ENCODE measurements at regions of chr5 and their contacts with region 1.

Region 1: GRCh38 chr5:141701360-141702119 is 19.5 kb upstream of the ARAP3 start:
- DNase-seq: no peak
- H3K4me3 Mint-ChIP-seq: no peak overlapping the region
- H3K27ac Mint-ChIP-seq: no peak overlapping the region
- H3K4me1 Mint-ChIP-seq: no peaks in the 10 kb centered on the region
- H3K27me3 Mint-ChIP-seq: peaks cover 19% of the 10 kb centered on the region
- CTCF ChIP-seq: no peak

Region 2: DNA sequence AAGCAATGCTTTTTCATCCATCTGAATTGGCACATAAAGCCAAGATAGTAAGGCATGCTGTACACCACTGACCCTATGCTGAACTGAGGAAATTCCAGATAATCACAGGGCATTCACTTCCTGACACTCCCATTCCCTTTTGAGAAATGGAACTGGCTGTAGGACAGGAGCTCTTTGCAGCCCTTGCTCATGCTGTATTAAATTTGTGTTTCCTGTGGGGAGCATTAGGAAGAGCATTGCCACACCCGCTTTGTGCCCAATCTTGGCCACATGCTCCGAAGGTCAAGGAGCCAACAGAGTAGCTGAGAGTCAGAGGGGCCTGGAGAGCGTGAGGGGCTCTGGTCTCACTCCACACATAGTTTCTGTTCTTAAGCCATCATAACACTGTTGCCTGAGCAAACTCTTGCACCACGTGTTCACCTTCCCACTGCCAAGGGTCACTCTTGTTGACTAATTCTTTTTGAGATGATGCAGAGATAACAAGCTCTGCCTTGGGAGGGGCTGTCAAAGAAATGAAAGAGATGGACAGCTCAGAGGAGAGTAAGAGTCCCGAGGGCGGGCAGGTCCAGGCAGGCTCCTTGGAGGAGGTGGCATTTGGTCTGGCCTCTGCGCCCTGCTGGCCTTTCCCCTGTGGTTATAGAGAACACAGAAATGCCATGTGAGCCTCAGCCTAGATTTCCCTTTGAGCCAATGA is 12.2 kb after region 1 on chr5:
- CTCF ChIA-PET with region 1: interaction called, 35 read pairs
- POLR2A ChIA-PET with region 1: interaction called, 3 read pairs
- intact Hi-C with region 1: no loop called
- DNase-seq: peak; percentile 96
- H3K4me3 Mint-ChIP-seq: peak overlapping the region; percentile 5
- H3K27ac Mint-ChIP-seq: peak overlapping the region; percentile 73
- H3K4me1 Mint-ChIP-seq: peaks cover 37% of the 10 kb centered on the region
- H3K27me3 Mint-ChIP-seq: no peaks in the 10 kb centered on the region
- CTCF ChIP-seq: no peak

Region 3: DNA sequence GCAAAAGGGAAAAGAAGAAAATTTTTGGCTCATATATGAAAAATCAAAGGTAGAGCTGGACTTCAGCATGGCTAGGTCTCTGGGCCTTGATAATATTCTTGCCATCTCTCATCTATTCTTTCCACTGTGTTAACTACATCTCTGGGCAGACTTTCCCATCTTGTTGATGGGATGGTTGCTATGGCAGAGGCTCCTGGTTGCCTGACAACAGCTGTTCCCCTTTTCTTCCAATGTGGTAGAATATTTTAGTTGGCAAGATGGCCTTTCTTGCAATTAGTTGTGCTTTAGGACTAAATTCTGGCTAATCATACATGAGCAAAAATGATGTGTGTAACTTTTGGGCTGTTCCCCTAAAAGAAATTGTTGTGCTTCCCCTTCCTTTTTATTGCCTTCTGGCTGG is 20.7 kb after region 1 on chr5:
- CTCF ChIA-PET with region 1: interaction called, 14 read pairs
- POLR2A ChIA-PET with region 1: no interaction called
- intact Hi-C with region 1: no loop called
- DNase-seq: no peak
- H3K4me3 Mint-ChIP-seq: no peak overlapping the region
- H3K27ac Mint-ChIP-seq: no peak overlapping the region
- H3K4me1 Mint-ChIP-seq: no peaks in the 10 kb centered on the region
- H3K27me3 Mint-ChIP-seq: no peaks in the 10 kb centered on the region
- CTCF ChIP-seq: no peak

Region 4: GRCh38 chr5:141757402-141757801 is 55.9 kb after region 1 on chr5:
- CTCF ChIA-PET with region 1: interaction called, 8 read pairs
- POLR2A ChIA-PET with region 1: interaction called, 3 read pairs
- intact Hi-C with region 1: loop called (anchors 5 kb)
- DNase-seq: peak; percentile 71
- H3K4me3 Mint-ChIP-seq: no peak overlapping the region
- H3K27ac Mint-ChIP-seq: no peak overlapping the region
- H3K4me1 Mint-ChIP-seq: no peaks in the 10 kb centered on the region
- H3K27me3 Mint-ChIP-seq: peaks cover 61% of the 10 kb centered on the region
- CTCF ChIP-seq: peak; percentile 49

Measured in MCF 10A (cell line).